Gastrocnemius medialis (tissue), 4 donors: ENCODE measurements at regions of chr7 and their contacts with region 1.

Region 1: DNA sequence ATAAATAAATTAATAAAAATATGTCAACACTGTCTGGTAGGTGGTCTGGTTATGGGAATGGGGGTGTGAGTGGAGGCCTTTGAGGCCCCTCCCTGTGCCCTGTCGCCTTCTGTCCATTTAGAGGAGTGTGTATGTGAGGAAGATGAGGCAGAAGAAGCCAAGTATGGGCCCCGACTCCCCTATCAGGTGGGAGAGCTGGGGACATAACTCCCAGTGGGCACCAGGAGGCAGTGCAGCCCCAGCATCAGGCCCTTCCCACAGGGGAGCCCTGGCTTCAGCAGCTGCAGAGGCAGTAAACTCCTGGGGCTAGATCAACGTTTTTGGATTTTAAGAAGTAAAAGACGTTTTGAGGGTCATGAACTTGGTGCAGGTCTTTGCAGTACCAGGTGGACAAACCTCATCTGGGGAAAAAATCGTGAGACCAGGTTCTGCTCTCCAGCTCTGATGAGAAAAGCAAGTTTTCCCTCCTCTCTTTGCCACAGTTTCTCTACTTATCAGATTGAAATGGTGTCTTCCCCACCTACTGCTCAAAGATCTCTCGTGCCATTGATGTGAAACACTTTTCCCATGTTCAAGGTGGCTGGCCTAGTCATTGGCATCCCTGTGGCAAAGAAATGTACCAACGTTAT is 167.8 kb upstream of the EEPD1 start:
- DNase-seq: peak; percentile 68 to 72
- ATAC-seq: peak; percentile 61 to 90
- H3K4me3 ChIP-seq: no peak overlapping the region
- H3K27ac ChIP-seq: no peak overlapping the region
- H3K4me1 ChIP-seq: peaks cover 15 to 23% of the 10 kb centered on the region in 2 donors
- H3K27me3 ChIP-seq: no peaks in the 10 kb centered on the region
- CTCF ChIP-seq: peak; percentile 86 to 93 (median 93)
- POLR2A ChIP-seq: no peak

Region 2: GRCh38 chr7:34523226-34523918 is 1461.9 kb before region 1 on chr7:
- in situ Hi-C with region 1: no loop called
- intact Hi-C with region 1: no loop called
- DNase-seq: no peak
- ATAC-seq: no peak
- H3K4me3 ChIP-seq: no peak overlapping the region
- H3K27ac ChIP-seq: no peak overlapping the region
- H3K4me1 ChIP-seq: no peaks in the 10 kb centered on the region
- H3K27me3 ChIP-seq: no peaks in the 10 kb centered on the region
- CTCF ChIP-seq: no peak
- POLR2A ChIP-seq: no peak

Region 3: DNA sequence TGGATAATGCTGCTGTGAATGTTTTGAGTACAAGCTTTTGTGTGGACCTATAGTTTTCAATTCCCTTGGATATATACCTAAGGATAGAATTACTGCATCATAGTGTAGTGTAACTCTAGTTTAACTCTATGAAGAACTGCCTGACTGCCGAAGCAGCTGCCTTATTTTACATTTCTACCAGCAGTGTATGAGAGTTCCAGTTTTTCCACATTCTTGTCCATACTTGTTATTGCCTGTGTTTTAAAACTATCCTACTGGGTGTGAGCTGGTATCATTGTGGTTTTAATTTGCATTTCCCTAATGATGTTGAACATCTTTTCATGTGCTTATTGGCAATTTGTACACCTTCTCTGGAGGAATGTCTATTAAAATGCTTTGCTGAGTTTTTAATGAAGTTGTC is 168.7 kb before region 1 on chr7:
- in situ Hi-C with region 1: no loop called
- intact Hi-C with region 1: no loop called
- DNase-seq: no peak
- ATAC-seq: no peak
- H3K4me3 ChIP-seq: no peak overlapping the region
- H3K27ac ChIP-seq: no peak overlapping the region
- H3K4me1 ChIP-seq: peaks cover 0 to 13% of the 10 kb centered on the region in 2 donors
- H3K27me3 ChIP-seq: no peaks in the 10 kb centered on the region
- CTCF ChIP-seq: no peak
- POLR2A ChIP-seq: no peak

Region 4: GRCh38 chr7:36096460-36097095 is 111.3 kb after region 1 on chr7:
- in situ Hi-C with region 1: loop called in 2 of 4 experiments (anchors 10 kb)
- intact Hi-C with region 1: loop called (anchors 1 kb)
- DNase-seq: peak; percentile 41 to 42
- ATAC-seq: peak; percentile 89 to 96
- H3K4me3 ChIP-seq: no peak overlapping the region
- H3K27ac ChIP-seq: peak overlapping the region; percentile 30 to 75 (median 60)
- H3K4me1 ChIP-seq: peaks cover 6 to 20% of the 10 kb centered on the region in 2 donors
- H3K27me3 ChIP-seq: no peaks in the 10 kb centered on the region
- CTCF ChIP-seq: peak in 2 of 5 experiments; percentile 17 to 18
- POLR2A ChIP-seq: no peak

Region 5: GRCh38 chr7:36128448-36129047 is 143.3 kb after region 1 on chr7:
- in situ Hi-C with region 1: loop called in 1 of 4 experiments (anchors 10 kb)
- intact Hi-C with region 1: no loop called
- DNase-seq: peak; percentile 87 to 91
- ATAC-seq: peak; percentile 65 to 80
- H3K4me3 ChIP-seq: peak overlapping the region in 2 of 4 donors; percentile 22 to 37
- H3K27ac ChIP-seq: peak overlapping the region; percentile 86 to 98 (median 95)
- H3K4me1 ChIP-seq: peaks cover 50 to 51% of the 10 kb centered on the region in 2 donors
- H3K27me3 ChIP-seq: no peaks in the 10 kb centered on the region
- CTCF ChIP-seq: peak; percentile 86 to 91 (median 88)
- POLR2A ChIP-seq: peak in 1 of 2 donors; percentile 45

Region 6: DNA sequence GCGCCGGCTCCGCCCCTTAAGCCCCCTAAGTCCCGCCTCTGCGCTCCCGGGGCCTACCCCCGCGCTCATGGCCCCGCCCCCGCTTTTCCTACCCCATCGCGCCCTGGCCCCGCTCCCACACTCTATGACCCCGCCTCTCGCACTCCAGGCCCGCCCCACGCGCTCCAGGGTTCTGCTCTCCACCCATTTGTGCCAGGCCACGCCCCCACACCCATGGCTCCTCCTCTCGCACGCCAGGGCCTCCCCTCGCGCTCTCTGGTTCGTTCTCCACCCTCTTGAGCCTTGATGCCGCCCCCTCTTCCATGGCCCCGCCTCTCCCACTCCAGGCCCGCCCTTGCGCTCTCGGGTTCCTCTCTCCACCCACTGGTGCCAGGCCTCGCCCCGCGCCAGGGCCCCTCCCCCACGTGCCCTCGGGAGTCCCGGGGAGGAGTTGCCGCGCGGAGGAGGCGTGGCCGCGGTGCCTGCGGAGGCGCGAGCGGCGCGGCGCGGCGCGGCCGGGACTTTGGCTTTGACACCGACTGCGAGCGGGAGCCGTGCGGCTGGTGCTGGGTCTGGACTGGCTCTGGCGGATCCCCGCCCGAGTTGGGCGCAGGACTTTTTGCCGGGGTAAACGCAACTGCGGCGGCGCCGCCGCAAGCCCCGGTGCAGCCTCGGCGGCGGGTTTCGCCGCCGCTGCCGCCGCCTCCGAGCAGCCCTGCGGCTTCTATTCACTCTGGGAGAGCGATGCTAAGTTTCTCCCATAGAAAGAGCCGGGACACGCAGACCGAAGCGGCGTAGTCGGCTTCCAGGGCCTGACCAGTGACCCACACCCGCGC is 167.7 kb after region 1 on chr7 and contains the start of gene EEPD1:
- in situ Hi-C with region 1: no loop called
- intact Hi-C with region 1: loop called (anchors 2 kb)
- DNase-seq: peak; percentile 100
- ATAC-seq: peak; percentile 71 to 81
- H3K4me3 ChIP-seq: peak within 1 kb of the TSS; percentile 85 to 93 (median 88)
- H3K27ac ChIP-seq: peak within 1 kb of the TSS; percentile 94 to 98 (median 95)
- H3K4me1 ChIP-seq: peaks cover 32 to 37% of the 10 kb centered on the region in 2 donors
- H3K27me3 ChIP-seq: no peaks in the 10 kb centered on the region
- CTCF ChIP-seq: no peak
- POLR2A ChIP-seq: peak; percentile 91 to 96
- total RNA-seq, gene EEPD1: 41.0 to 68.5 (median 61.3) TPM

Region 7: DNA sequence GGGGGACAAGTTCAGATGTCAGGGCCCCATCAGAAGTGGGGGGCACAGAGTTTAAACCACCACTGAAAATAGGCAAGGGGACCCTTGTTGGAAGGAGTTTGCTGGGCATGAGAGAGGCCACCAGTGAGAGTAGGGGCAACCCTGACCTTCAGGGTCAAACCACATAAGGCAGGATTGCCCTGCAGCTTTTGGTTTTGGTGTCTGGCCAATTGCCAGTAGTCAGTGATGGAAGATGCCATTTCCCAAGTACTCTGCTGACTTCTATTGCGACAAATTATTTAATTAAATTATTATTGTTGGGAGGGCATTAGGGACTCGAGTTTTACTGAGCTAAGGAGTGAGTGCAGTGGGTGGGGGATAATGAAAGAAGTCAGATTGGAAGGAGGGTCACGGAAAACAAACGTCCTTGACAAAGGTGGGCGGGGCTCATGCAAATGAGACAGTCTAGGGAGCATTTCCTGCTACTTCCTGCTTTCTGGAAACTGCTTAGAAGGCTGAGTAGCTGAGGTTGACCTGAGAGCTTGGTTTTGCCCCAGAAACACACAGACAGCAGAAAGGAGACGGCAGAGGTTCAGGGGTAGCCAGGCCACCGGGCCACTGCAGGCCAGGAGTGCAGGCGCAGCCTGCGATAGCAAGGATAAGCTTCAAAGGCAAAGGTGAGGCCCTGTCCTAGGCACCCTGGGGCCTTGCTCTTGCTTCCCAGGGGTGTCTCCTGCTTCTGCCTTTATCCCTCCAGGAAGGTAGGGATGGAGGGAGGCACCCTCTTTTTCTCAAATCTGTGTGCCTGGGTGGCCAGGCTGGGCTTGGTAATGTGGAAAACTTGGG is 330.3 kb after region 1 on chr7:
- in situ Hi-C with region 1: no loop called
- intact Hi-C with region 1: loop called (anchors 1 kb)
- DNase-seq: no peak
- ATAC-seq: no peak
- H3K4me3 ChIP-seq: no peak overlapping the region
- H3K27ac ChIP-seq: no peak overlapping the region
- H3K4me1 ChIP-seq: no peaks in the 10 kb centered on the region
- H3K27me3 ChIP-seq: no peaks in the 10 kb centered on the region
- CTCF ChIP-seq: no peak
- POLR2A ChIP-seq: no peak